Gastrocnemius medialis (tissue), 4 donors: ENCODE measurements at regions of chr3 and their contacts with region 1.

Region 1: GRCh38 chr3:89762405-89762804 is 655.0 kb downstream of the EPHA3 start:
- DNase-seq: no peak
- ATAC-seq: no peak
- H3K4me3 ChIP-seq: no peak overlapping the region
- H3K27ac ChIP-seq: no peak overlapping the region
- H3K4me1 ChIP-seq: no peaks in the 10 kb centered on the region
- H3K27me3 ChIP-seq: no peaks in the 10 kb centered on the region
- CTCF ChIP-seq: no peak
- POLR2A ChIP-seq: no peak

Region 2: DNA sequence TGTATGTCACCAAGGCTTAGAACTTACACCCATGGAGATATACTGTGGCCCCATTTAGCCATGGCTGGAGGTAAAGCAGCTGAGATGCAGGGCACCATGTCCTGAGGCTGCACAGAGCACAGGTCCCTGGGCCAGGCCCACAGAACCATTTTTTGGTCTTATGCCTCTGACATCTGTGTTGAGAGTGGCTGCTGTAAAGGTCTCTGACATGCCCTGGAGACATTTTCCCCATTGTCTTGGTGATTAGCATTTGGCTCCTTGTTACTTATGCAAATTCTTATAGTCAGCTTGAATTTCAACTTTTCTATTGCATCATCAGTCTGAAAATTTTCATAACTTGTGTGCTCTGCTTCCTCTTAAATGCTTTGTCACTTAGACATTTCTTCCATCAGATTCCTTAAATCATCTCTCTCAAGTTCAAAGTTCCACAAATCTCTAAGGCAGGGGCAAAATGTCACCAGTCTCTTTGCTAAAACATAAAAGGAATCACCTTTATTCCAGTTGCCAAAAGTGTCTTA is 46.3 kb after region 1 on chr3:
- in situ Hi-C with region 1: no loop called
- intact Hi-C with region 1: no loop called
- DNase-seq: no peak
- ATAC-seq: no peak
- H3K4me3 ChIP-seq: no peak overlapping the region
- H3K27ac ChIP-seq: no peak overlapping the region
- H3K4me1 ChIP-seq: no peaks in the 10 kb centered on the region
- H3K27me3 ChIP-seq: no peaks in the 10 kb centered on the region
- CTCF ChIP-seq: no peak
- POLR2A ChIP-seq: no peak

Region 3: GRCh38 chr3:89851974-89852621 is 89.7 kb after region 1 on chr3:
- in situ Hi-C with region 1: loop called in 1 of 4 experiments (anchors 25 kb)
- intact Hi-C with region 1: no loop called
- DNase-seq: no peak
- ATAC-seq: no peak
- H3K4me3 ChIP-seq: no peak overlapping the region
- H3K27ac ChIP-seq: no peak overlapping the region
- H3K4me1 ChIP-seq: no peaks in the 10 kb centered on the region
- H3K27me3 ChIP-seq: no peaks in the 10 kb centered on the region
- CTCF ChIP-seq: peak in 2 of 5 experiments; percentile 21 to 31
- POLR2A ChIP-seq: no peak

Region 4: DNA sequence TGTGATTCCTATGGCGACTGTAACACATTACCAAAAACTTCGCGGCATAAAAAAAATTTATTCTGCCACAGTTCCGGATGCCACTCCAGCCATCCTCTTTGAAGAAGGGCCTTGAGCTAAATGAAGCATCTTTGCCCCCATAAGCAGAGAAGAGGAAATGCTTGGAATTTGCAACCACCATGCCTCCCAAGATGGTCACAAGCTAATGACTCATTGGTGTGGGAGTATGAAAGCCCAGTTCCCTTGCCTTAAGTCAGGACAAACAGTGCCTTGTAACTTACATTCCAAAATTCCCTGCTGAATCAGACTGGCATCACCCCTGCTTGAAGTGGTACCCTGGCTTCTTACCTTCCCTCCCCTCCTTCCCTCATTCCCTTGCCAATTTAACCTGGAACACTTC is 422.5 kb after region 1 on chr3:
- in situ Hi-C with region 1: no loop called
- intact Hi-C with region 1: no loop called
- DNase-seq: no peak
- ATAC-seq: no peak
- H3K4me3 ChIP-seq: no peak overlapping the region
- H3K27ac ChIP-seq: no peak overlapping the region
- H3K4me1 ChIP-seq: no peaks in the 10 kb centered on the region
- H3K27me3 ChIP-seq: no peaks in the 10 kb centered on the region
- CTCF ChIP-seq: no peak
- POLR2A ChIP-seq: no peak